ENCODE measurements at regions of chr9 and their contacts with region 1.

Region 1: DNA sequence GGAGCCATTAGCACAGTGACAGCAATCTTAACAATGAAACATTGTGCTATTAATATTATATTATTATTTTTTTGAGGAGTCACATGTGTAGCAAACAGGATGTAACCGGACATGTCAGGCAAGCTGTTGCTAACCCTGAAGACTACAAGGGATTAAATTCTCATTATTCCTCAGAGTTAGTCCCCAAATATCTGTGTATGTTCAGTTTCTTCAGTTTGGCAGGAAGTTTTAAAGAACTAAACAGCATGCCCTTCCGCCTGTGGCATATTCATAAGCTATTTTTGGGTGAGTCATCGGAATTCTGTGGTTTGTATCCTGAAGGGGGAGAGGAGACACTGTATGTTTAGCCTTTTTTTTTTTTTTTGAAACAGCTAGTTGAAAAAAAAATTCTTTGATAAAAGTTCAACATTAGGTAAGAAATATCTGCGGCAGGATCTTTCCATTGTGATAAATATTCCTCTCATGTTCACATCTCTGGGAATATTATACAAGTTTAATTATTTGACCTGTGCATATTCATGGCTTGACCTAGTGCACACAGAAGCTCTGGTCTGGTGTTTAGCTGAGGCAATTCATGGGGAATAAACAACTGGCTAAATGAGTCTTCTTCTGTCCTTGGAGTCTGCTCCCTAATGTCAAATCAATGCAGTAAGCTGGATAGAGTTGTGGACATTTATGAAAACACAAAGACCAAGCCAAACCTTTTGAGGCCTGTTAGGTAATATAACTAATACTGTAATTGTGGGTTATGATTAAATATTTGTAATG is 202.7 kb upstream of the CDKN2B start:
- DNase-seq: peak; percentile 93
- ATAC-seq: peak; percentile 88
- H3K4me3 ChIP-seq: no peak overlapping the region
- H3K27ac ChIP-seq: peak overlapping the region; percentile 0; the same call in 1 of the 2 replicates
- H3K4me1 ChIP-seq: peaks cover 6% of the 10 kb centered on the region; the same call in 1 of the 2 replicates
- H3K27me3 ChIP-seq: no peaks in the 10 kb centered on the region
- CTCF ChIP-seq: no peak
- POLR2A ChIP-seq: no peak
- RAD21 ChIP-seq: no peak

Region 2: GRCh38 chr9:21443849-21444625 is 767.7 kb before region 1 on chr9:
- CTCF ChIA-PET with region 1: no interaction called
- POLR2A ChIA-PET with region 1: interaction called, 10 read pairs
- dilution Hi-C with region 1: no loop called
- in situ Hi-C with region 1: no loop called
- intact Hi-C with region 1: no loop called
- DNase-seq: no peak
- ATAC-seq: no peak
- H3K4me3 ChIP-seq: no peak overlapping the region
- H3K27ac ChIP-seq: no peak overlapping the region
- H3K4me1 ChIP-seq: no peaks in the 10 kb centered on the region; the same call in 1 of the 2 replicates
- H3K27me3 ChIP-seq: no peaks in the 10 kb centered on the region
- CTCF ChIP-seq: no peak
- POLR2A ChIP-seq: no peak
- RAD21 ChIP-seq: no peak

Region 3: GRCh38 chr9:22119537-22120158 is 92.1 kb before region 1 on chr9:
- CTCF ChIA-PET with region 1: interaction called, 11 read pairs
- POLR2A ChIA-PET with region 1: no interaction called
- dilution Hi-C with region 1: no loop called
- in situ Hi-C with region 1: no loop called
- intact Hi-C with region 1: no loop called
- DNase-seq: peak; percentile 50
- ATAC-seq: peak; percentile 30; the same call in 1 of the 2 replicates
- H3K4me3 ChIP-seq: no peak overlapping the region
- H3K27ac ChIP-seq: no peak overlapping the region
- H3K4me1 ChIP-seq: peaks cover 16% of the 10 kb centered on the region
- H3K27me3 ChIP-seq: no peaks in the 10 kb centered on the region
- CTCF ChIP-seq: peak; percentile 64
- POLR2A ChIP-seq: no peak
- RAD21 ChIP-seq: peak; percentile 75

Region 4: DNA sequence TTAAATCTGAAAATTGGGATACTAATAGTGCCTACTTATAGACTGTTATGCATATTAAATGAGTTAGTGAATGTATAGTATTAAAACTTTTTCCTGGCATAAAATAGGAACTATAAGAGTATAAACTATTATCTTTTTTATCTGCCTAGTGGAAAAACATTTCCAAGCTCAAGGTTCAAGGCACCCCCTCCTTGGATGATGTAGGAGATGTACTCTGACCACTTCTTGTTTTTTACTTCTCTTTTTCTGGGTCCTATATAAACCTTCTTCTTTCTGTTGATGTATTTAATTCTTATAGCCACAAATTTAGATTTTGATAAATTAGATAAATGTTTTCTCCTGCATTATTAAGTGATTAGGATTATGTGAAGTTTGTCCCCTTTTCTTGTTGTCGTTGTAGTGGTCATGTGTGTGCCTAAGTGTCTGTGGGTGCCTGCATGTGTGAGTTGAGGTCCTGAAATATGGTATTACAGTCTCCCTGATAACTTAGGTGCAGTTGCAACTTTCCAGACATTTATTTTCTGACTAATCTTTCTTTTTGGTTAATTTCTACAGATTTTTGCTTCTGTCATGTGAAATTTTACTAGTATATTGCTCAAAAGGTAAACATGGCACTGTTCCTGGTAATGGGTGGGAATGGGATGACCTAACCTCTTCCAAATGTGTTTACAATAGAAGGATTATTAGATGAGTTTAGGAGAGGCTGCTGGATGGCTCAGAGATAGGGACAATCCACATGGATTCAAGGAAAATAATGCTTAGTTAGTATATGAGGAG is 41.9 kb before region 1 on chr9:
- CTCF ChIA-PET with region 1: interaction called, 6 read pairs
- POLR2A ChIA-PET with region 1: no interaction called
- dilution Hi-C with region 1: no loop called
- in situ Hi-C with region 1: no loop called
- intact Hi-C with region 1: loop called (anchors 5 kb)
- DNase-seq: peak; percentile 89
- ATAC-seq: peak; percentile 85
- H3K4me3 ChIP-seq: no peak overlapping the region
- H3K27ac ChIP-seq: 0 out of 2 replicates have a peak overlapping the region, but pooled peaks have one; percentile 57
- H3K4me1 ChIP-seq: peaks cover 9% of the 10 kb centered on the region
- H3K27me3 ChIP-seq: no peaks in the 10 kb centered on the region
- CTCF ChIP-seq: no peak
- POLR2A ChIP-seq: no peak
- RAD21 ChIP-seq: no peak

Measured in IMR-90 (cell line).